CD4-positive, alpha-beta T cell (primary cell): ENCODE measurements at regions of chr6 and their contacts with region 1.

Region 1: DNA sequence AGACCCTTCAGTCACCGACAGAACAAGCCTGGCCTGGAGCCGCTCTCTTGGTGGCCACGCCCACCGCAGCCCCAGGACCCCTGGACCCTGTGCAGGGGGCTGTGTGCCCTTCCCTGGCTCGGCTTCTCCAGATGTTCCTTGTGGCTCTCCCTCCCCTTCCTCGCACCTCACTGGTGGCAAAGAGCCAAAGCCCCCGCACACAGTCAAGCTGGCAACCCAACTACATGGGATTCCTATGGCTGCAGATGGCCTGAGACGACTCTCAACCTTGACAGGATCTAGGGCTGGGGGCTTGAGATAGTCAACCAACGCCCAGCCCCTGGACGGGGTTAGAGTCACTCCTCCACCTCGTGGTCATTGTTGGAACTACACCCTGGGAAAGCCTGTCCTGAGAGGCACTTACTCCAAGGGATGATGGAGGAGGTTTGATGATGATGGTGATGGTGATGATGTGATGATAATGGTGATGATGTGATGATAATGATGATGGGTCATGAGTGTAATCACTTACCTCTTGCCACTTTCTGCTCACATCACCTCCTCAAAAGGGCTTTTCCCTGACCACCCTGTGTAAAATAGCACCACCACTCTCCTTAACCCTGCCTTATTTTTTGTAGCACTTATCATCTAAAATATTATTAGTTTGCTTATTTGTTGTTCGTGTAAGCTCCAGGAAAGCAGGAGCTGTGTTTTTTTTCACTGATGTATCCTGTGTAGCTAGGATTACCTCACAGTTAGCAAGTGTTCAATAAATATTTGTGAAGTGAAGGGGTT is 278.4 kb downstream of the LRFN2 start:
- DNase-seq: peak; percentile 12 to 57 (median 34)
- ATAC-seq: no peak
- H3K4me3 ChIP-seq: no peak overlapping the region
- H3K4me3 Mint-ChIP-seq: no peak overlapping the region
- H3K27ac ChIP-seq: no peak overlapping the region
- H3K27ac Mint-ChIP-seq: no peak overlapping the region
- H3K4me1 ChIP-seq: no peaks in the 10 kb centered on the region
- H3K4me1 Mint-ChIP-seq: no peaks in the 10 kb centered on the region
- H3K27me3 ChIP-seq: peaks cover 13 to 18% of the 10 kb centered on the region in 2 experiments
- H3K27me3 Mint-ChIP-seq: peaks cover 44% of the 10 kb centered on the region
- CTCF ChIP-seq: peak; percentile 62

Region 2: GRCh38 chr6:39347906-39348585 is 960.7 kb before region 1 on chr6:
- CTCF ChIA-PET with region 1: no interaction called
- POLR2A ChIA-PET with region 1: no interaction called
- intact Hi-C with region 1: loop called (anchors 5 to 10 kb)
- DNase-seq: peak; percentile 20 to 64 (median 37)
- ATAC-seq: peak; percentile 37
- H3K4me3 ChIP-seq: no peak overlapping the region
- H3K4me3 Mint-ChIP-seq: no peak overlapping the region
- H3K27ac ChIP-seq: no peak overlapping the region
- H3K27ac Mint-ChIP-seq: no peak overlapping the region
- H3K4me1 ChIP-seq: no peaks in the 10 kb centered on the region
- H3K4me1 Mint-ChIP-seq: no peaks in the 10 kb centered on the region
- H3K27me3 ChIP-seq: no peaks in the 10 kb centered on the region
- H3K27me3 Mint-ChIP-seq: peaks cover 5% of the 10 kb centered on the region
- CTCF ChIP-seq: peak; percentile 84

Region 3: GRCh38 chr6:39361657-39362486 is 946.8 kb before region 1 on chr6:
- CTCF ChIA-PET with region 1: no interaction called
- POLR2A ChIA-PET with region 1: no interaction called
- intact Hi-C with region 1: loop called (anchors 5 to 10 kb)
- DNase-seq: peak in 13 of 14 experiments; percentile 13 to 65 (median 26)
- ATAC-seq: peak; percentile 52
- H3K4me3 ChIP-seq: no peak overlapping the region
- H3K4me3 Mint-ChIP-seq: no peak overlapping the region
- H3K27ac ChIP-seq: no peak overlapping the region
- H3K27ac Mint-ChIP-seq: no peak overlapping the region
- H3K4me1 ChIP-seq: peaks cover 7% of the 10 kb centered on the region
- H3K4me1 Mint-ChIP-seq: peaks cover 4% of the 10 kb centered on the region
- H3K27me3 ChIP-seq: no peaks in the 10 kb centered on the region
- H3K27me3 Mint-ChIP-seq: peaks cover 12% of the 10 kb centered on the region
- CTCF ChIP-seq: peak; percentile 60

Region 4: GRCh38 chr6:39865011-39865888 is 443.5 kb before region 1 on chr6:
- CTCF ChIA-PET with region 1: no interaction called
- POLR2A ChIA-PET with region 1: no interaction called
- intact Hi-C with region 1: loop called (anchors 5 kb)
- DNase-seq: peak; percentile 19 to 65 (median 39)
- ATAC-seq: no peak
- H3K4me3 ChIP-seq: no peak overlapping the region
- H3K4me3 Mint-ChIP-seq: no peak overlapping the region
- H3K27ac ChIP-seq: no peak overlapping the region
- H3K27ac Mint-ChIP-seq: no peak overlapping the region
- H3K4me1 ChIP-seq: no peaks in the 10 kb centered on the region
- H3K4me1 Mint-ChIP-seq: no peaks in the 10 kb centered on the region
- H3K27me3 ChIP-seq: no peaks in the 10 kb centered on the region
- H3K27me3 Mint-ChIP-seq: peaks cover 13% of the 10 kb centered on the region
- CTCF ChIP-seq: peak; percentile 87